Right ventricle myocardium inferior (tissue), 1 donor: ENCODE measurements at regions of chr6 and their contacts with region 1.

Region 1: GRCh38 chr6:85455471-85456026 is 5.7 kb downstream of the NT5E start:
- DNase-seq: no peak
- ATAC-seq: no peak

Region 2: DNA sequence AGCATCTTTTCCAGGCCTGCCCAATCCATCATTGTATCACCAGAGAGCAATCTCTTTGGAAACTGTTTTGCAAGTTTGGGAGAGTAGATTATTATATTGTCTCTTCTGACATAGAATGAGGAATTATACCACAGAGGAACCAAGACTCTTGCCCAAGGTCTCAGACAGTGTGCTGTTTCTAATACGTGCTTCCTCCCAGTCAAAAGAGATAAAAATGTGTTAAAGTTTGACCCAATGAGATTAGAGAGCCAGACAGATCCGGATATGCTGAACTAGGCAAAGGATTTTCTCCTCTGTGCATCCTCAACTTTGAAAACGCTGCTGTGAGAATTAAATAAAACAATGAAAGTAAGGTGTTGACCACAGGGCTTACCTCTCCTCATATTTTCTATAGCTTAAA is 24.3 kb before region 1 on chr6:
- intact Hi-C with region 1: loop called (anchors 1 kb)
- DNase-seq: no peak
- ATAC-seq: no peak

Region 3: GRCh38 chr6:85561750-85562357 is 106.3 kb after region 1 on chr6:
- intact Hi-C with region 1: no loop called
- DNase-seq: no peak
- ATAC-seq: no peak